Cardiac septum (tissue), 1 donor: ENCODE measurements at regions of chr3 and their contacts with region 1.

Region 1: DNA sequence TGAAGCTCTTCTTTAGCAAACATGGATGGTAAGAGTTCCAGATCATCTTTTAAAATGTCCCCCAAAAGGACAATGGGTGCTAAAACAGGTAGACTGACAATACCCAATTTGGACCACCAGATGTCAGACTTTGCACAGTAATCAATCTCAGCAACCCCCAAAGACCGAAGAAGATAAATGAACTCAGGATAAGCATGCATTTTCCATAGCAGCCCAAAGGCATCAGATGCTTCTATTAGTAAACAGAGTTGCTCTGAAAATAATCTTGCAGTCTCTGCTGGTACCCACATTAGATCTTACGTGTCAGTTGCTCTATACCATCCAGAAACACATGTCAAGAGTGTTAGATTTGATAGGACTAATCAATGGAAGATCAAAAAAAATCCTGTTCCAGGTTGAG is 20.6 kb downstream of the MYH15 start:
- DNase-seq: no peak

Region 2: GRCh38 chr3:108552267-108553159 is 62.7 kb after region 1 on chr3:
- intact Hi-C with region 1: loop called (anchors 2 kb)
- DNase-seq: no peak

Region 3: GRCh38 chr3:108767253-108767652 is 277.5 kb after region 1 on chr3:
- intact Hi-C with region 1: no loop called
- DNase-seq: no peak

Region 4: DNA sequence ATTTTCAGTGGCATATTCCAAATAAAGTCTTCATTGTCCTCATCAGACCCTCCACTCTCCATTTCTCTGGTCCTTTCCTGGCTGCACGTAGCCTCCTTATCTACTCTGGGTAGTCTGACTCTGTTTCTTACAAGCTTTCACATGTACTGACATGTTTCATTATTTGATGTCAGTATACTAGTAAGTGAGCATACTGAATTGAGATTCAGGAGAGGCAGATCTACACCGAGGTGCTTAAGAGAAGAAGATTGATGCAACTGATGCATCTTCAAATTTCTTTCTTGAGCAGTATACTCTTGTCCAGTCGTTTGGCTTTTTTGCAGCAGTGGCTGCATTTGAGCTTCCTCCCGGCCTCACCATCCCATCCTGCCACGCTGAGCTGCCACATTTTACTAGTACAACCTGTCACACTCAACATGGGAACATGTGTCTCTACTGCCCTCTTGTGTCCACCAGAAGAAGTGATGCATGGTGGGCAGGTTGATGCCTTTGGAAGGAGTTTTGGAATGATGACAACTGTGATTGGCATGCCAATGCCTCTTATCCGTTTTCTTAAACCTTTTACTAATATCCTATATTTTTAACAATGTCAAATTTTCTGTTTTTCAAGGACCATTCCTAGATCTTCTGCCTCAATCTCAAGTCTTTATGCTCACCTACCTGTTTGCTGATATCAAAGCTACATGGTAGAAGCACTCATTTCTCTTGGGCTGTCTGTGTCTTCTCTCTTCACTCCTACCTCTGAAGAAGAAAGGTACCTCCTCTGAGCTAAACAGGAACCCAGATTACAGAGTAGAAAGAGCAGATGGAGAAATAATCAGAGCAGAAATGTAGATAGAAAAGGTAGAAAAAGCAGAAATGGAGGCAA is 425.2 kb after region 1 on chr3:
- intact Hi-C with region 1: loop called (anchors 10 kb)
- DNase-seq: no peak